ENCODE measurements at regions of chr16 and their contacts with region 1.

Region 1: DNA sequence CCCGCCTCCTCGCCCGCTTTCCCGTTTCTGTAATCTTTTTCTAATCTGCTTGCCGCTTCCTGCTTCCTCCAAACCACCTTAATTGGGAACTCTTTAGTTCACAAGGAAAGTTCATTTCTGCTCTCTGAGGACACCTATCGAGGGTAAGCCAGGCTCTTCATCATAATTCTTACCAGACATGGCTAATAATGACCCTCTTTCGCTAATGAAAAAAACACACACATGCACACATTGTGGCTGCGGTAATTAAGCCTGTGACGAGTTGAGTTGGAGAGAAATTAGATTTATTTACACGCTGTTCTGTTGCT is 100.6 kb downstream of the ZNF423 start:
- DNase-seq: no peak
- ATAC-seq: peak; percentile 47
- H3K4me3 ChIP-seq: peak overlapping the region in 1 of 2 donors; percentile 48
- H3K27ac ChIP-seq: no peak overlapping the region
- H3K4me1 ChIP-seq: no peaks in the 10 kb centered on the region
- H3K27me3 ChIP-seq: no peaks in the 10 kb centered on the region

Region 2: DNA sequence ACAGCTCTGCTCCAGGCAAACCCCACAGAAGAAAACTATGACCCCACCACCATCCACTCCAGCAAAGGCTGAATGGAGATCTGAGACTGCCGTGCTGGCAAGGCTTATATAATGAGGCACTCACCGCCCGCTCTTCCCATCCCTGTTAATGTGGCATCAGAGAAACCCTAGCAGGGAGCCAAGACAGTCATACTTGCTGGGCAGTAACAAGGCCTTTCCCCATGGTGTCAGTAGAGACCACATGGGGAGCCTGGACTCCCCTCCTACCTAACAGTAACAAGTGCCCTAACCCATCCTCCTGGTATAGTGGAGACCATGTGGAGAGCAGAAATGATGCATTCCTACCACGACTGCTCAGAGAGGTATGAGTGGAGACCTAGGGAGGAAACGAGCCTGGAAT is 146.5 kb before region 1 on chr16:
- intact Hi-C with region 1: loop called in 1 of 2 experiments (anchors 10 kb)
- DNase-seq: peak in 1 of 2 donors; percentile 55
- ATAC-seq: peak; percentile 84
- H3K4me3 ChIP-seq: no peak overlapping the region
- H3K27ac ChIP-seq: no peak overlapping the region
- H3K4me1 ChIP-seq: no peaks in the 10 kb centered on the region
- H3K27me3 ChIP-seq: no peaks in the 10 kb centered on the region

Region 3: GRCh38 chr16:49827805-49828438 is 72.7 kb after region 1 on chr16:
- intact Hi-C with region 1: no loop called
- DNase-seq: peak in 1 of 2 donors; percentile 84
- ATAC-seq: peak; percentile 78
- H3K4me3 ChIP-seq: no peak overlapping the region
- H3K27ac ChIP-seq: peak overlapping the region in 1 of 2 donors; percentile 50
- H3K4me1 ChIP-seq: no peaks in the 10 kb centered on the region
- H3K27me3 ChIP-seq: no peaks in the 10 kb centered on the region

Measured in aorta (tissue), 5 donors.